ENCODE measurements at regions of chr9 and their contacts with region 1.

Region 1: DNA sequence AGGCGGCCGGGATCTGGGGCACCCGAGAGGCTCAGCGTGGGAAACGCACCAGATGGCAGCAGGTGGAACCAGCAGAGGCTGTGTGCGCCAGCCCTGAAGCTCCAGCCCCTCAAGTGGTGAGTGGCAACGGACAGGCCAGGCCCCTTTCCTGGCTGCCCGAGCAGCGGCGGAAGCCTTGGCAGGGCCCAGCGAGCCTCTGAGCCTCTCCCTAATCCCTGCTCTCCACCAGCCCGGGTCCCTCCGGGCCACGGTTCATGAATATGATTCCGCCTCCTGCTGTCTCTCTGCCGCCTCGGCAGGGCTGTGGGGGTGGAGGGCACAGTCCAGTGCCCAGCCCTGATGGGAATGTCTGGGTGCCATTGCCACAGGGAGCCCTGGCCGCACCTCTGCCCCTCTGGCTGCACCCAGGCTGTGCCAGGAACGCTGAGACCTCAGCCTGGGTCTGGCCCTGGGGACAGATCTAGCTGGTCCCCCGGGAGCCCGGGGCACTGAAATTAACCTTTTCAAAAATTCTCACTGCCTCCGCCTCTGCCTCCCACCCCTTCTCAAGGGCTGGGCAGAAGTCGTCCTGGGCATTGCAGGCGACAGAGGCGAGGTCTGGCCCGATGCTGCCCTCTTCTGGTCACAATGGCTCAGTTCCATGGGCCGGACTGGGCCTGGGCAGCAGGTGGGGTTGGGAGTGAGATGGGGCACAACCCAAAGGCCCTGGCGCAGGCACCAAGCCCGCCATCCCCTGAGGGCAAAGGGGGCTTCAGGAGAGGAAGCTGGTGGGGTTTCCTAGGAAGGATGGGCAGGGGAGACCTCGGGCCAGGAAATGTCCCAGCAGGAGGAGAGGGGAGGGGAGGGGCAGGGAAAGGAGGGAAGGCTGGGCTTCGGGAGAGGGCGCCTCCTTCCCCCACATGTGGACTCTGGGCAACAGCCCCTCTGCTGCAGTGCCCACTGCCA is 20.3 kb downstream of the CCDC187 start:
- DNase-seq: peak; percentile 43 to 93
- H3K4me3 ChIP-seq: no peak overlapping the region
- H3K27ac ChIP-seq: no peak overlapping the region
- H3K4me1 ChIP-seq: peaks cover 0 to 4% (median 2%) of the 10 kb centered on the region in 4 experiments; a peak in 3 of 7 replicates
- H3K27me3 ChIP-seq: no peaks in the 10 kb centered on the region
- CTCF ChIP-seq: peak in 2 of 3 experiments; percentile 89 to 92; a peak in 3 of 4 replicates
- EP300 ChIP-seq: no peak
- POLR2A ChIP-seq: no peak
- RAD21 ChIP-seq: peak; percentile 86 to 92

Region 2: DNA sequence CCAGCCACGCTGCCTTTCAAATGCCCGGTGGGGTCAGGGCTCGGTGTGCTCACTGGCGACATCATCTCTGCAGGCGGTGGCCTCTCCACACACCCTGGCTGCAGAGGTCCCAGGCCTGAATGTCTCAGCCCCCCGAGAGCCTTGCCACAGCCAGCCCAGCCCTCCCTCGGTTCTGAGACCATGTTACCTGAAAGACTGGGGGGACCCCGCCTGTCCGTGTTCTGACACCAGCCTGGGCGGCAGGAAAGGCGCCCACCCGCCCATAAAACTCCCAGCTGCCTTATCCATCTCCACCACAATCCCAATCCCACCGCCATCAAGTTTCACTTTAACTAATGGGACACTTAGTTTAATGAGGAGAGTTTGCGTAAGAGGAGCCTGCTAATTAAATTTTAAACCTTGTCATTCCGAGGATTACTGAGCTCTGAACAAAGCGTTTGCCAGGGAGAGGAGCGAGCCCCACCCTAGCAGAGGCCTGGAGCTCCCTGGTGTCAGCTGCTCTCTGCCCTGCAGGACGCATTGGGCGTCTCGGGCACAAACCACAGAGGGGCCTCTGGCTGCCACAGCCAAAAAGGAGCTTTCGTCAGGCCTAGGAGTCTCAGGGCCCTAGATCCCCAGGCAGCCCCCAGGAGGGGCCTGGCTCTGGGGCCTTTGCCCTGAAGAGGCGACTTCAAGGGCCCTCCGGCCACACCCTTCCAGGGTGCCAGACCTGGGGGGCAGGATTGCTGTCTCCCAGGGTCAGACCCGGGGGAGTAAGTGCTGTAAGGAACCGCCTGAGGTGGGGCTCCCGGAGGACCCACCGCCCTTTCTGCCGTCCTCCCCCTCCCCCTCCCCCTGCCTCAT is 93.9 kb before region 1 on chr9:
- CTCF ChIA-PET with region 1: interaction called, 11 read pairs
- POLR2A ChIA-PET with region 1: no interaction called
- DNase-seq: peak in 1 of 2 experiments; percentile 50
- H3K4me3 ChIP-seq: no peak overlapping the region
- H3K27ac ChIP-seq: no peak overlapping the region
- H3K4me1 ChIP-seq: peaks cover 0 to 11% (median 6%) of the 10 kb centered on the region in 4 experiments; a peak in 5 of 7 replicates
- H3K27me3 ChIP-seq: peaks cover 33 to 49% (median 46%) of the 10 kb centered on the region in 4 experiments
- CTCF ChIP-seq: no peak
- EP300 ChIP-seq: no peak
- POLR2A ChIP-seq: no peak
- RAD21 ChIP-seq: no peak

Region 3: GRCh38 chr9:136267261-136268111 is 16.1 kb before region 1 on chr9:
- CTCF ChIA-PET with region 1: interaction called, 40 read pairs
- POLR2A ChIA-PET with region 1: no interaction called
- DNase-seq: peak; percentile 58 to 90
- H3K4me3 ChIP-seq: peak overlapping the region; percentile 21 to 78 (median 49)
- H3K27ac ChIP-seq: peak overlapping the region; percentile 40; the same call in 1 of the 2 replicates
- H3K4me1 ChIP-seq: peaks cover 0 to 17% (median 6%) of the 10 kb centered on the region in 4 experiments; a peak in 5 of 7 replicates
- H3K27me3 ChIP-seq: no peaks in the 10 kb centered on the region
- CTCF ChIP-seq: peak in 2 of 3 experiments; percentile 7 to 17; a peak in 1 of 4 replicates
- EP300 ChIP-seq: no peak
- POLR2A ChIP-seq: peak in 1 of 2 experiments; percentile 74; a peak in 2 of 3 replicates
- RAD21 ChIP-seq: peak in 1 of 2 experiments; percentile 26; a peak in 2 of 4 replicates

Region 4: DNA sequence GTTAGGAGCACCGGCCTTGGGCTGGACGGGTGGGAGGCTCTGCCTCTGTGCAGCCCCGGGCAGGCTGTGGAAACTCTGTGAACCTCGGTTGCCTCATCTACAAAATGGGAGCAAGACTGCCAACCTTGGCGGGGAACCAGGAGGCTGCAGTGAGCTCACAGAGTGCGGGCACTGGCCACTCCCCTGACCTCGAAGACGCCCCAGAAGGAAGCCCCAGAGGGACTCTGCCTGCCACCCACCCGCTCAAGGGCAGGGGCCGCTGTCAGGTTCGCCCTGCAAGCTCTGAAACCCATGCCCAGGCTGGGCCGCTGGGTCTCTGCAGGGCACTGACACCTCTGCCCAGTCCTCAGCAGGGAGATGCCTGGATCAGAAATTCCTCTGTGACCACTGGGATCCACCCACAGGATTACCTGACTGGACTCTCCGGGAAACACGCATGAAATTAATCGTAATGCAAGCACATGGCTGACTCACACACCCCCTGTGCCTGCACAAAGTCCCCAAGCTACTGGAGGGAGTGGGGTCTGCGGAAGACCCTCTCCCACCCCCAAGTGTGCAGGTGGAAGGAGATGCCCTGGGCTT is 13.0 kb after region 1 on chr9:
- CTCF ChIA-PET with region 1: interaction called, 12 read pairs
- POLR2A ChIA-PET with region 1: interaction called, 3 read pairs
- DNase-seq: no peak
- H3K4me3 ChIP-seq: no peak overlapping the region
- H3K27ac ChIP-seq: no peak overlapping the region
- H3K4me1 ChIP-seq: no peaks in the 10 kb centered on the region; a peak in 1 of 7 replicates
- H3K27me3 ChIP-seq: no peaks in the 10 kb centered on the region
- CTCF ChIP-seq: no peak
- EP300 ChIP-seq: no peak
- POLR2A ChIP-seq: no peak
- RAD21 ChIP-seq: no peak

Region 5: DNA sequence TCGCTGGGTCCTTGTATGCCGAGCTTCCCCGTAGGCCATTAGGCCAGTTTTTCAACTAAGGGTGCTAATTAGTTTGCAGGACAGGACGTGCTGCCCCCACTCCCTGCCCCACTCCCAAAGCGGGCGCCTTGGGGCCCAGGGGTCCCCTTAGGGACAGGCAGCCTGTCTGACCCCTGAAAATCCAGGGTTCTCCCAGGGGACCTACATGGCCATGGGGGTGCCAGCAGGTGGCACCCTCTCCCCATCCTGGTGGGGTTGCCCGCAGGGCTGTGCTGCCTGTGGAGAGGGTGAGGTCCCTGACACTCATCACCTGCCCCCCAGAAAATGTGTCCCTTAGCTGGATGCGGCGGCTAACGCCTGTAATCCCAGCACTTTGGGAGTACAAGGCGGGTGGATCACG is 28.9 kb after region 1 on chr9:
- CTCF ChIA-PET with region 1: no interaction called
- POLR2A ChIA-PET with region 1: no interaction called
- DNase-seq: no peak
- H3K4me3 ChIP-seq: no peak overlapping the region
- H3K27ac ChIP-seq: no peak overlapping the region
- H3K4me1 ChIP-seq: 0 out of 7 replicates have a peak, but pooled peaks cover 0 to 3% (median 0%) of the 10 kb centered on the region in 4 experiments
- H3K27me3 ChIP-seq: no peaks in the 10 kb centered on the region; a peak in 1 of 7 replicates
- CTCF ChIP-seq: peak in 2 of 3 experiments; percentile 59 to 79; a peak in 3 of 4 replicates
- EP300 ChIP-seq: no peak
- POLR2A ChIP-seq: no peak
- RAD21 ChIP-seq: peak; percentile 77 to 83

Region 6: DNA sequence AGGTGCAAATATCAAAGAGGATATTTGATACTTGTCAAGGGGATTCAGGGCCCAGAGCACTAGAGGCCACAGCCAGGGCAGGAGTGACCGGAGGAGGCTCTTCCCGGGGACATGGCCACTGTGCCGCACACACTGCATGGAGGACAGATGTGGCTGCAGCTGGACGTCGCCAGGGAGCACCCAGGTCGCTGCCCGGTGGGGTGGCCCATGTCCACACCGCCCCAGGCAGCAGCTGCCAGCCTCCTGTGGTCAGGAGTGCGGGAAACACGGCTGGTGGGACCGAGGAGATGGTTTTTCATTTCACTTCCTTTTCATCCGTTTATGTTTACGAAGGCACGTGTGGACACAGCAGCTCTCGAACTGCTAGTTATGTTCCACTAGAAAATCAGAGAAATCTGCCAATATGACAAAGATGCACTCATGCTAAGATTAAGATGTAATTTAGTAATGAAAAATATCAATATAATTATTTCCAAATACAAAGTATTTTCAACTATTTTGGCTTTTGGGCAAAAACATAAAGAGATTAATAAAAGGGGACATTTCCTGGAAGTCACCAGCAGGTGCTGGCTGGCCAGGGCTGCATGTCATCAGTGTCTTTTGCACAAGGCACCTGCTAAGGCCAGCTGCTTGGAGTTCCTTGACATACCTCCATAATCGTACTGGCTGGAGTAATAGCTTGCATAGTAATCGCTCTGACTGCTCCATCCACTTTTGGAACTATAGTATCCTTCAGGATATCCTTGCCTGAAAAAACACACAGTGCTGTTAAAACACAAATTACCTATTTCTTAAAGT is 184.4 kb after region 1 on chr9:
- CTCF ChIA-PET with region 1: no interaction called
- POLR2A ChIA-PET with region 1: no interaction called
- DNase-seq: no peak
- H3K4me3 ChIP-seq: no peak overlapping the region
- H3K27ac ChIP-seq: no peak overlapping the region
- H3K4me1 ChIP-seq: no peaks in the 10 kb centered on the region
- H3K27me3 ChIP-seq: no peaks in the 10 kb centered on the region
- CTCF ChIP-seq: no peak
- EP300 ChIP-seq: no peak
- POLR2A ChIP-seq: no peak
- RAD21 ChIP-seq: no peak

Measured in H1 (cell line).